Mammary epithelial cell (primary cell): ENCODE measurements at regions of chr11 and their contacts with region 1.

Region 1: GRCh38 chr11:117205211-117205818 is 6.1 kb downstream of the TAGLN start:
- DNase-seq: no peak
- H3K4me3 ChIP-seq: no peak overlapping the region
- H3K27ac ChIP-seq: no peak overlapping the region
- H3K4me1 ChIP-seq: peaks cover 2% of the 10 kb centered on the region
- H3K27me3 ChIP-seq: no peaks in the 10 kb centered on the region
- CTCF ChIP-seq: no peak

Region 2: DNA sequence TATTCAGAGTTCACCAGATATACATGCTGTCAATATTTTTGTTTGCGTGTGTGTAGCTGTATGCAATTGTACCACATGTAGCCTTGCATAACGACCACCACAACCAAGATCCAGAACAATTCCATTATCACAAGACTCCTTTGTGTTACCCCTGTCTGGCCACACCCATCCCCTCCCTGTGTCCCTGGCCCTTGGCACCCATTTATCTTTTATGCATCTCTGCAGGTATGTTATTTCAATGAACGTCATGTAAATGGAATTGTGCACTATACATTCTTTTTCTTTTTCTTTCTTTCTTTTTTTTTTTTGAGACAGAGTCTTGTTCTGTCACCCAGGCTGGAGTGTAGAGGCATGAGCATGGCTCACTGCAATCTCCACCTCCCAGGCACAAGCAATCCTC is 70.9 kb before region 1 on chr11:
- CTCF ChIA-PET with region 1: no interaction called
- dilution Hi-C with region 1: no loop called
- in situ Hi-C with region 1: no loop called
- intact Hi-C with region 1: loop called (anchors 5 kb)
- DNase-seq: no peak
- H3K4me3 ChIP-seq: no peak overlapping the region
- H3K27ac ChIP-seq: no peak overlapping the region
- H3K4me1 ChIP-seq: no peaks in the 10 kb centered on the region
- H3K27me3 ChIP-seq: no peaks in the 10 kb centered on the region
- CTCF ChIP-seq: no peak